Activated naive CD4-positive, alpha-beta T cell treated with anti-CD3 and anti-CD28 coated beads, Interleukin-2, amount 10 ng/mL, durations not matched to agents 7 days and 5 days (primary cell): ENCODE measurements at regions of chr16 and their contacts with region 1.

Region 1: DNA sequence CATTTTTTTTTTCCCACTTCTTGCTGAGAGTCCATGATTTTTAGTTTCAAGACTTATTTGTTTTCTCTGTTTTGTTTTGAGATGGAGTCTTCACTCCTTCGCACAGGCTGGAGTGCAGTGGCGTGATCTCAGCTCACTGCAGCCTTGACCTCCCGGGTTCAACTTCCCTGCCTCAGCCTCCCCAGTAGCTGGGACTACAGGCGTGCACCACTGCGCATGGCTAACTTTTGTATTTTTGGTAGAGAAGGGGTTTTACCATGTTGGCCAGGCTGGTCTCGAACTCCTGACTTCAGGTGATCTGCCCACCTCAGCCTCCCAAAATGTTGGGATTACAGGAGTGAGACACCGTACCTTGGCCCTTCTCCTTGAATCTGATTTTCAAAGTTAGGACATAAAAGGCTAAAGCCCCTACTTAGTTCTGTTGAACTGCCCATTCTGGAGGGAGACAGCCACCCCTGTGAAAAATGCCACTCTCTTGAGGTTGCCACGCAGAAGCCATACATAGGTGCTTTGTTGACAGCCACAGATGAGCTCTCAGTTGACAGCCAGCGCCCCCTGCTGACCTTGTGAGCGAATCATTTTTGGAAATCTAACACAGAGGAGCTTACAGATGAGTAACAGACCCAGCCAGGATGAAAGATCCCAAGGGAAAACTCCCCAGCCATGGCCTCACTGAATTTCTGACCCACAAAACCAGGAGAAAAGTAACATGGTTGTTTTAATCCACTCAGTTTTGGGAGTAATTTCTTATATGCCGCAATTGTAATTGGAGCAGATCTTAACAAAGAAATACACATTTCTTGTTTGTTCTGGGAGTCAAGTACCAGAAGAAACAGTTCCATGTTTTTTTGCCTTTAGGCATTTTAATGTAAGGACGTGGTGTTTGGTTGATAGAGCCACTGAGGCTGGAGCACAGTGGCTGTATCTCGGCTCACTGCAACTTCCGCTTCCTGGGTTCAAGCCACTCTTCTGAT is 38.8 kb downstream of the PKD1L3 start:
- DNase-seq: peak; percentile 91
- H3K4me3 Mint-ChIP-seq: no peak overlapping the region
- H3K27ac Mint-ChIP-seq: no peak overlapping the region
- H3K4me1 Mint-ChIP-seq: peaks cover 29% of the 10 kb centered on the region
- H3K27me3 Mint-ChIP-seq: peaks cover 19% of the 10 kb centered on the region

Region 2: GRCh38 chr16:71504901-71505300 is 456.5 kb before region 1 on chr16:
- CTCF ChIA-PET with region 1: no interaction called
- DNase-seq: no peak
- H3K4me3 Mint-ChIP-seq: no peak overlapping the region
- H3K27ac Mint-ChIP-seq: no peak overlapping the region
- H3K4me1 Mint-ChIP-seq: no peaks in the 10 kb centered on the region
- H3K27me3 Mint-ChIP-seq: peaks cover 7% of the 10 kb centered on the region

Region 3: GRCh38 chr16:71564155-71564967 is 397.0 kb before region 1 on chr16:
- CTCF ChIA-PET with region 1: interaction called, 10 read pairs
- DNase-seq: no peak
- H3K4me3 Mint-ChIP-seq: peak overlapping the region; percentile 84
- H3K27ac Mint-ChIP-seq: peak overlapping the region; percentile 94
- H3K4me1 Mint-ChIP-seq: peaks cover 19% of the 10 kb centered on the region
- H3K27me3 Mint-ChIP-seq: peaks cover 15% of the 10 kb centered on the region

Region 4: GRCh38 chr16:72210555-72210954 is 249.2 kb after region 1 on chr16:
- CTCF ChIA-PET with region 1: no interaction called
- DNase-seq: no peak
- H3K4me3 Mint-ChIP-seq: no peak overlapping the region
- H3K27ac Mint-ChIP-seq: no peak overlapping the region
- H3K4me1 Mint-ChIP-seq: no peaks in the 10 kb centered on the region
- H3K27me3 Mint-ChIP-seq: peaks cover 13% of the 10 kb centered on the region